ENCODE measurements at regions of chr4 and their contacts with region 1.

Region 1: GRCh38 chr4:152640058-152640833 is 39.6 kb downstream of the TMEM154 start:
- DNase-seq: no peak
- H3K4me3 Mint-ChIP-seq: no peak overlapping the region
- H3K27ac Mint-ChIP-seq: peak overlapping the region; percentile 39
- H3K4me1 Mint-ChIP-seq: peaks cover 19% of the 10 kb centered on the region
- H3K27me3 Mint-ChIP-seq: no peaks in the 10 kb centered on the region

Region 2: GRCh38 chr4:152454398-152455011 is 185.7 kb before region 1 on chr4:
- CTCF ChIA-PET with region 1: interaction called, 11 read pairs
- DNase-seq: no peak
- H3K4me3 Mint-ChIP-seq: no peak overlapping the region
- H3K27ac Mint-ChIP-seq: no peak overlapping the region
- H3K4me1 Mint-ChIP-seq: peaks cover 35% of the 10 kb centered on the region
- H3K27me3 Mint-ChIP-seq: no peaks in the 10 kb centered on the region

Region 3: DNA sequence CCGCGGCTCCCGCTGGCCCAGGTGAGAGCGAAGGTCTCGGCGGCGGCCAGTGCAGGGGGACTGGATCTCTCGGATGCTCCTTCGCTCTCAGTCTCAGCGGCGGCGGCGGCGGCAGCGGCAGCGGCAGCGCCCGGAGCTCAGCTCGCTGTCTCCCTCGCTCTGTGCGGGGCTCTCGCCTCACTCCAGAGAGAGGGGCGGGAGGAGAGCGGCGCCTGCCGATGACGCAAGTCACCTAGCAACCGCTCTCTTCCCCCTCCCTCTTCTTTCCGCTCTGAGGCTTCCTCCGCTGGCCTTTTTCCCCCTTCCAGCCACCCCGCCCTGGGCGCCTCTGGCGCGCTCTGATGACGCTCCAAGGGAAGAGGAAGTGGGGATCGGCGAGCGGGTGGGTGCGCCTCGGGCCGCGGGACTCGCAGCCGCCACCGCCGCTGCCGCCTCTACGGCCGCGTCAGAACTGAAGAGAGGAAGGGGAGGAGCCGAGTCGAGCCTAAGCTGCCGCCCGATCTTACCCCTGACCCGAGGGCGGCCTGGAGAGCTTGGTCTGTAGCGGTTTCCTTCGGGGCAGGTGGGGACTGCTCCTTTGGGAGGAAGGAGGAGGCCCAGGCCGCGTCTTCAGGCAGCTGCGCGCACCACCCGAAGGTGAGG is 104.2 kb before region 1 on chr4 and contains the start of gene FBXW7:
- CTCF ChIA-PET with region 1: interaction called, 15 read pairs
- DNase-seq: peak; percentile 100
- H3K4me3 Mint-ChIP-seq: peak within 1 kb of the TSS; percentile 97
- H3K27ac Mint-ChIP-seq: peak within 1 kb of the TSS; percentile 100
- H3K4me1 Mint-ChIP-seq: peaks cover 52% of the 10 kb centered on the region
- H3K27me3 Mint-ChIP-seq: peaks cover 7% of the 10 kb centered on the region

Region 4: DNA sequence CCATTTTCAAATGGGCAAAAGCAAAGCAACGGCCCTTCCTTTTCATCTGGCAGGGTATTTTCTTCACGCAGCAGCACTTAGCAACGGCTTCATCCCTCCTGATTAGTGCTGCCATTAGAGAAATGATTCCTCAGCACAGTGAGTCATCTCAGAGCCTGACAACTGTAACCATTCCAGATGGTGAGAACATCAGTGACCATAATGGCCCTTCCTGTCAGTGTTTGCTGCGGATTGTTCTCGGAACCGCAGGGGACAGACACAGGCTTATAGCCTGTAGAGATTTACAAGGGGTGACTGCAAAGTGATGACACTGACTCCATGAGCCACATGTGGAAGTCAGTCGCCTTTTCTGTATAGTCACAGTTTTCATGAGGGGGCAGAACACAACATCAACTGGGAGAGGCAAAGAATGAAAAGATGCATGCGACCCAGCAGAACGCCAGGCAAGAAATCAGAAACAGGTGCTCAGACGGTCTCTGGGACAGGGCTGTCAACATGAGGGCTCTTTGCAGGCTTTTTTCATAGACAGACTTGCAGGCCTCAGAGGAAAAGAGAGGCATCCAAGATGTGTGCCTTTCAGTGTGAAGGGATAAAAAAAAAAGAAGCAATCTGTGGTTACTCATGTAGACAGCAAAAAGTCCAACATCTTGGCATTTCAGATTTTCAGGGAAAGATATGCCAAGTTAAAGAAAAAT is 34.5 kb before region 1 on chr4:
- CTCF ChIA-PET with region 1: no interaction called
- DNase-seq: no peak
- H3K4me3 Mint-ChIP-seq: no peak overlapping the region
- H3K27ac Mint-ChIP-seq: no peak overlapping the region
- H3K4me1 Mint-ChIP-seq: no peaks in the 10 kb centered on the region
- H3K27me3 Mint-ChIP-seq: peaks cover 26% of the 10 kb centered on the region

Region 5: DNA sequence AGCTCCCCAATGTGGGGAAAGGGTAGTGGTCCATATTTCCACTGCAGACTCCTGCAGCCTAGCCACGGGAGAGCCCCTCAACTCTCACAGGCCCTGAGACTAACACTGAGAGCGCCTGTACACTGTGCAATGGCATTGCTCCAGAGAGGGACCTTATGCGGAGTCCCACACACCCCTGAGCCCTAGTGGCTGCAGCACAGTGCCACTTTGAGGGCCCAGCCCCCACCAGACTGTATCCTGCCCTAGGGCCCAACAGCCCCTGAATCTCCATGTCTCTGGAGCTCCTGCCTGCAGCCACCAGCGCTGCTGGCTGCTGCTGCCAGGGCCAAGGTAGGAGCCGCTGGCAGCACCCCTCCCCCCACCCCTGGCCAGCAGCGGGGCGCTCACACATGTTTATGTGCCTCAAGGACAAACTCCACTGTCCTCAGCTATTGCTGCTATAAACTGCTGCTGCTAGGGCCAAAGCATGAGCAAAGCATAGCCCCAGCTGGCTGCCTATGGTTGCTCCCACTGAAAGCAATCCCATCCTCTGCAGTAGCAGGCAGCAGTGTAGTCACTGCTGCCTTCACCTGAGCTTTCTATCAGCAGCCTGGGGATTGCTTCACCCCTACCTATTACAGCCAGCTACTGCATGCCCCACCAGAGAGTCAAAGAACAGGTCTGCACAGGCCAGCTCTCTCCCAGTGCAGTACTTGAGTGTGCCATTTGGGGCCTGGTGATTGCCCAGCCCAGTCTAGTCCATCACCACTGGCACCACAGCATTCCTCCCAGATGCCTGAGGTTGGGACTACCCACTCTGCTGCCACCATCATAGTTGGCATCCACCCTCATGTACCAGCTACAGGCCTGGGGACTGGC is 15.3 kb after region 1 on chr4:
- CTCF ChIA-PET with region 1: no interaction called
- DNase-seq: no peak
- H3K4me3 Mint-ChIP-seq: no peak overlapping the region
- H3K27ac Mint-ChIP-seq: no peak overlapping the region
- H3K4me1 Mint-ChIP-seq: no peaks in the 10 kb centered on the region
- H3K27me3 Mint-ChIP-seq: no peaks in the 10 kb centered on the region

Measured in activated naive CD4-positive, alpha-beta T cell treated with anti-CD3 and anti-CD28 coated beads, Interleukin-2, amount 10 ng/mL, durations not matched to agents 7 days and 5 days (primary cell).